ENCODE measurements at regions of chr10 and their contacts with region 1.

Region 1: DNA sequence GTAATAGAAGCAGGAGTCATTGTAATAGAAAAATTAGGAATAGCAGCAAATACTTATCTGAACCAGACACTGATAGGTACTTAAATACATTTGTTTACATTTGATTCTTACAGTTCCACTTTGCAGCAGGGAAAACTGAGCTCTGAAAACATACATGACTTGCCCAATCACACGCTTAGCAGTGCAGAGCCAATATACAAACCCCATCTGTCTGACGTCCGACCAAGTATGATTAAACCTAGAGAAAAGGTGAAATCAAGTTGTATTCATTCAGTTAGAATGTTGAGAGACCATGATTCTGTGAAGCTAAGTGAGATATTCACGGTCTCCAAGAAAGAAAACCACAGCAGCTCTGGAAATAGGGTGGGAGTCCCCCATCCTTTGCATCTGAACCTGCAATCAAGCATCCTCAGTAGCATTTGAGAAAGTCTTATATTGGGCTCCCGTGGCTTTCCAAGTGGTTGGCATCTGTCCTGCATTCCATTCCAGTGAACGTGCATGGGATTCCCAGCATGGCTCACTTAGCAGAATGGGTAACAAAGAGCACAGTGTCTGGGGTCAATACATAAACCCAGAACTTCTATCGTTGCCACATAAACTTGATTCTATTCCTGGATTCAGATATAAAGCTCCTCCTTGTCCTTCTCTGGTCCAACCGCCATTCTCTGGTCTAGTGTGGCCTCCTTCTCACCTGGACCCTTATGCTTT is 148.7 kb upstream of the RSU1 start:
- DNase-seq: peak; percentile 77
- H3K4me3 Mint-ChIP-seq: no peak overlapping the region
- H3K27ac Mint-ChIP-seq: peak overlapping the region; percentile 54
- H3K4me1 Mint-ChIP-seq: peaks cover 44% of the 10 kb centered on the region
- H3K27me3 Mint-ChIP-seq: no peaks in the 10 kb centered on the region
- CTCF ChIP-seq: no peak

Region 2: GRCh38 chr10:17001961-17002749 is 36.3 kb after region 1 on chr10:
- CTCF ChIA-PET with region 1: no interaction called
- intact Hi-C with region 1: no loop called
- DNase-seq: no peak
- H3K4me3 Mint-ChIP-seq: no peak overlapping the region
- H3K27ac Mint-ChIP-seq: no peak overlapping the region
- H3K4me1 Mint-ChIP-seq: no peaks in the 10 kb centered on the region
- H3K27me3 Mint-ChIP-seq: peaks cover 14% of the 10 kb centered on the region
- CTCF ChIP-seq: no peak

Region 3: DNA sequence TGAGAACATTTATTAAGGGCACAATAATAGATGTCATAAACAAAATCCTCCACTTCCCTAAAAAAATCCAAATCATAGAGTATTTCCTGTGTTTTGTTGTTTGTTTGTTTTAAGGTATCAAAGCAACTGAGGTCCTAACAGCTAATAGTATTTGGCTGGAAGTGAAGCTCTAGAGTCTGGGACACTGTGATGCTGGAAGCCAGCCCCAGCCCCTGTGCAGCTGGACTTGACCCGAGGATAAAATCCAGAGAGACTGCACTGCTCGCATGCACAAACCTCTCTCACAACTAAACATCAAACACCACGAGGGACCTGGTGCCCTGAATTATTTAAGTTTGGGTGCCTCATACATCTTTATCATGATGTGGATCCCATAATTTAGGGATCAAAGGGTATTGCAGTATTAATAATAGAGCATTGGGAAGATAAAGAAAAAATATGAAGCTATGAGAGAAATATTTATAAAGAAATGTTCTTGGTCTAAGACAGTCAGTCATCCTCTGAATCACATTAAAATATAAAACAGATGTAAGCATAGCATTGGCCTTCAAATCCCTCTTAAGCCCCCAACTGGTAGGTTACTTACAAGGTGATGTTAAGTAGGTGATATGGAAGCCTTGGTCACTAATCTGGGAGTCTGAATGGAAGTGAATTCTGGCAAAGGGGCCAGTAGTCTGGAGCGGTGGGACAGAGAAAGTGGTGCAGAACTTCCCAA is 119.3 kb after region 1 on chr10:
- CTCF ChIA-PET with region 1: no interaction called
- intact Hi-C with region 1: no loop called
- DNase-seq: no peak
- H3K4me3 Mint-ChIP-seq: no peak overlapping the region
- H3K27ac Mint-ChIP-seq: no peak overlapping the region
- H3K4me1 Mint-ChIP-seq: no peaks in the 10 kb centered on the region
- H3K27me3 Mint-ChIP-seq: no peaks in the 10 kb centered on the region
- CTCF ChIP-seq: no peak

Region 4: DNA sequence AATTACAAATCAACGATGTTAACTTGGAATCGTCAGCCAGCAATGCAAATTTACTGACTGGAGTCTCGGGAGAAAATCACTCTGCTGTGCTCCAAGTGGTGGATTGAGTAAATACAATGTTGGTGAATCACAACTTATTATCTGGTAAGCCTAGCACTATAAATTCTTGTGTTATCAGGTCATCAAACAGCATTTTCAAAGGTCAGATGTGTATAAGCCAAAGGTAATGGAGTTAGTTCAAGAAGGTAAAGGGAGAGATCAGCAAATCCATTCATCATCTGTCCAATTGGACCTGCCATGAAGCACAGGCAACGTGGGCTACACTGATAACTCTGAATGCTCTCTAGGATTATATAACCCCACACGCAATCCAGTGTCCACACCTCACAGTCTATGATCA is 149.8 kb after region 1 on chr10:
- CTCF ChIA-PET with region 1: no interaction called
- intact Hi-C with region 1: loop called (anchors 5 kb)
- DNase-seq: peak; percentile 31
- H3K4me3 Mint-ChIP-seq: peak overlapping the region; percentile 61
- H3K27ac Mint-ChIP-seq: peak overlapping the region; percentile 77
- H3K4me1 Mint-ChIP-seq: peaks cover 31% of the 10 kb centered on the region
- H3K27me3 Mint-ChIP-seq: no peaks in the 10 kb centered on the region
- CTCF ChIP-seq: no peak

Region 5: DNA sequence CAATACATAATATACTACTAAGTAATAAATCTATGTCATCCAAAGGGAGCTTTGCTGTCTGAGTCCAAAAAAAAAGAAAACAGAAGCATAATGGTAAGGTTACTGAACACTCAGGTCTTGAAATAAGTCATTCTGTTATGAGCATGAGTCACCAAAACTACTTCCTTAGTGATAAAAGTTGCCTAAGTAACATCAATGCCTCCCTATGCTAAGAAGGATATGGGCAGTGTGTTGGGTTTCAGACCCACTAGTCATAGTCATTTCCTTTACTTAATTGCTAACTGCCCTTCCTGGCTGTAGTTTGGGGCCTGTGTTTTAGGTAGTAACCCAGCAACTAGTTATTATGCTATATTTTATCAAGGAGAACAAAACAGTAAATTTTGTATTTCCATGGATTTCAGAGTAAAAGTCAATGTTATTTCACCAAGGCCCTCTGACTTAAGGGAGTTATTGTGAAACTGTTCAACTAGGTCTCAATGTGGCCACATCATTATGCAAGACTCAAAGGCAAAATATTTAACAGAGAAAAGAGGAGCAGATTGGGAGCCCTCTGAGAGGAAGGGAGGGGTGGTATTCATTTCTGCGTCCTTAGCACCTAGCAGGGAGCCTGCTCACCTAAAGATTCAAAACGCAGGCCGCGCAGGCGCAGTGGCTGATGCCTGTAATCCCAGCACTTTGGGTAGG is 250.5 kb after region 1 on chr10:
- CTCF ChIA-PET with region 1: no interaction called
- intact Hi-C with region 1: loop called (anchors 10 kb)
- DNase-seq: peak; percentile 58
- H3K4me3 Mint-ChIP-seq: peak overlapping the region; percentile 26
- H3K27ac Mint-ChIP-seq: peak overlapping the region; percentile 99
- H3K4me1 Mint-ChIP-seq: peaks cover 48% of the 10 kb centered on the region
- H3K27me3 Mint-ChIP-seq: no peaks in the 10 kb centered on the region
- CTCF ChIP-seq: no peak

Region 6: GRCh38 chr10:17368708-17369272 is 402.9 kb after region 1 on chr10:
- CTCF ChIA-PET with region 1: no interaction called
- intact Hi-C with region 1: no loop called
- DNase-seq: no peak
- H3K4me3 Mint-ChIP-seq: no peak overlapping the region
- H3K27ac Mint-ChIP-seq: no peak overlapping the region
- H3K4me1 Mint-ChIP-seq: no peaks in the 10 kb centered on the region
- H3K27me3 Mint-ChIP-seq: no peaks in the 10 kb centered on the region
- CTCF ChIP-seq: no peak